IMR-90 (cell line): ENCODE measurements at regions of chr17 and their contacts with region 1.

Region 1: DNA sequence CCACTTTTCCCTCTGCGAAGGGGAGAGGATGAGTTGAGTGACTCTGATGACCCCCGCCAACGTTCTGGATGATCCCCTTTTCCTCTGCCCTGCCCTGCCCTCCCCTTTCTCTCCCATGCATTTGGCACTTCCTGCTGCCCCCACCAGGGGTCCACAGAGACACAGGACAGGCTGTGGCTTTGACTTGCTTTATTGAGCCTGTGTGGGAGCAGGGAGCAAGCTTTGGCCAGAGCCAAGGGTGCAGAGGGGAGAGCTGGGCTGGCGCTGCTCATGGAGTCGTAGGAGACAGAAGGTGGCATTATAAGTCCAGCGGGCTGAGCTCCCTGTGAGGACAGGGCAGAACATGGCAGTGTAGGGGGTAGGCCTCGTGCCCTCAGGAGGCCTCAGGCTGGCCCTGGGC is 1.6 kb downstream of the PPY start:
- DNase-seq: peak; percentile 35
- ATAC-seq: peak; percentile 74
- H3K4me3 ChIP-seq: no peak overlapping the region
- H3K27ac ChIP-seq: no peak overlapping the region
- H3K4me1 ChIP-seq: no peaks in the 10 kb centered on the region; the same call in 1 of the 2 replicates
- H3K27me3 ChIP-seq: peaks cover 36% of the 10 kb centered on the region
- CTCF ChIP-seq: peak; percentile 63
- POLR2A ChIP-seq: no peak
- RAD21 ChIP-seq: peak; percentile 63

Region 2: DNA sequence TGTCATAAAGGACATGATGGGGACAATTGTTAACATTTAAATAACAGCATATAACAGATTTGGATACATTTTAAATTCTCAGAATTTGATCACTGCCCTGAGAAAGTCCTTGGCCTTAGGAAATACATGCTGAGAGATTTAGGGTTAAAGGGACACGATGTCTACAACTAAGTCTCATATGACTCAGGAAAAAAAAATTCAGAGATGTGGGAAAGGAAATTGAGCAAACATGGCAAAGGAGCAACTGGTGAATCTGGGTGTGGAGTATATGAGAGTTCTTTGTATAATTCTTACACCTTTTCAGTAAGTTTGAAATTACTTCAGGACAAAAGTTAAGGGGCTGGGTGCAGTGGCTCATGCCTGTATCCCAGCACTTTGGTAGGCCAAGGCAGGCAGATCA is 125.9 kb before region 1 on chr17:
- CTCF ChIA-PET with region 1: no interaction called
- POLR2A ChIA-PET with region 1: no interaction called
- dilution Hi-C with region 1: no loop called
- in situ Hi-C with region 1: no loop called
- intact Hi-C with region 1: no loop called
- DNase-seq: peak; percentile 77
- ATAC-seq: peak; percentile 86
- H3K4me3 ChIP-seq: no peak overlapping the region
- H3K27ac ChIP-seq: 0 out of 2 replicates have a peak overlapping the region, but pooled peaks have one; percentile 5
- H3K4me1 ChIP-seq: peaks cover 6% of the 10 kb centered on the region
- H3K27me3 ChIP-seq: no peaks in the 10 kb centered on the region
- CTCF ChIP-seq: no peak
- POLR2A ChIP-seq: no peak
- RAD21 ChIP-seq: no peak

Region 3: GRCh38 chr17:43878260-43879175 is 62.1 kb before region 1 on chr17:
- CTCF ChIA-PET with region 1: no interaction called
- POLR2A ChIA-PET with region 1: no interaction called
- dilution Hi-C with region 1: no loop called
- in situ Hi-C with region 1: no loop called
- intact Hi-C with region 1: loop called (anchors 5 kb)
- DNase-seq: peak; percentile 89
- ATAC-seq: peak; percentile 100
- H3K4me3 ChIP-seq: no peak overlapping the region
- H3K27ac ChIP-seq: no peak overlapping the region
- H3K4me1 ChIP-seq: peaks cover 2% of the 10 kb centered on the region; the same call in 1 of the 2 replicates
- H3K27me3 ChIP-seq: peaks cover 10% of the 10 kb centered on the region
- CTCF ChIP-seq: peak; percentile 95
- POLR2A ChIP-seq: no peak
- RAD21 ChIP-seq: peak; percentile 87

Region 4: GRCh38 chr17:43888548-43888947 is 52.1 kb before region 1 on chr17:
- CTCF ChIA-PET with region 1: no interaction called
- POLR2A ChIA-PET with region 1: no interaction called
- dilution Hi-C with region 1: no loop called
- in situ Hi-C with region 1: no loop called
- intact Hi-C with region 1: no loop called
- DNase-seq: no peak
- ATAC-seq: no peak
- H3K4me3 ChIP-seq: no peak overlapping the region
- H3K27ac ChIP-seq: no peak overlapping the region
- H3K4me1 ChIP-seq: no peaks in the 10 kb centered on the region
- H3K27me3 ChIP-seq: peaks cover 12% of the 10 kb centered on the region
- CTCF ChIP-seq: no peak
- POLR2A ChIP-seq: no peak
- RAD21 ChIP-seq: no peak

Region 5: GRCh38 chr17:43900183-43900857 is 40.3 kb before region 1 on chr17:
- CTCF ChIA-PET with region 1: no interaction called
- POLR2A ChIA-PET with region 1: no interaction called
- dilution Hi-C with region 1: no loop called
- in situ Hi-C with region 1: no loop called
- intact Hi-C with region 1: no loop called
- DNase-seq: peak; percentile 72
- ATAC-seq: peak; percentile 100
- H3K4me3 ChIP-seq: peak overlapping the region; percentile 43
- H3K27ac ChIP-seq: no peak overlapping the region
- H3K4me1 ChIP-seq: no peaks in the 10 kb centered on the region
- H3K27me3 ChIP-seq: no peaks in the 10 kb centered on the region; the same call in 1 of the 2 replicates
- CTCF ChIP-seq: no peak
- POLR2A ChIP-seq: no peak
- RAD21 ChIP-seq: no peak

Region 6: GRCh38 chr17:43927060-43927864 is 13.4 kb before region 1 on chr17:
- CTCF ChIA-PET with region 1: no interaction called
- POLR2A ChIA-PET with region 1: no interaction called
- dilution Hi-C with region 1: no loop called
- in situ Hi-C with region 1: no loop called
- intact Hi-C with region 1: no loop called
- DNase-seq: no peak
- ATAC-seq: no peak
- H3K4me3 ChIP-seq: no peak overlapping the region
- H3K27ac ChIP-seq: no peak overlapping the region
- H3K4me1 ChIP-seq: no peaks in the 10 kb centered on the region
- H3K27me3 ChIP-seq: peaks cover 79% of the 10 kb centered on the region
- CTCF ChIP-seq: no peak
- POLR2A ChIP-seq: no peak
- RAD21 ChIP-seq: no peak

Region 7: GRCh38 chr17:43994272-43995149 is 53.9 kb after region 1 on chr17:
- CTCF ChIA-PET with region 1: interaction called, 11 read pairs
- POLR2A ChIA-PET with region 1: no interaction called
- dilution Hi-C with region 1: no loop called
- in situ Hi-C with region 1: no loop called
- intact Hi-C with region 1: loop called (anchors 1 kb)
- DNase-seq: peak; percentile 37
- ATAC-seq: peak; percentile 99
- H3K4me3 ChIP-seq: no peak overlapping the region; the same call in 1 of the 2 replicates
- H3K27ac ChIP-seq: no peak overlapping the region
- H3K4me1 ChIP-seq: no peaks in the 10 kb centered on the region; the same call in 1 of the 2 replicates
- H3K27me3 ChIP-seq: peaks cover 18% of the 10 kb centered on the region
- CTCF ChIP-seq: peak; percentile 96
- POLR2A ChIP-seq: peak; percentile 38; the same call in 1 of the 2 replicates
- RAD21 ChIP-seq: peak; percentile 93

Region 8: DNA sequence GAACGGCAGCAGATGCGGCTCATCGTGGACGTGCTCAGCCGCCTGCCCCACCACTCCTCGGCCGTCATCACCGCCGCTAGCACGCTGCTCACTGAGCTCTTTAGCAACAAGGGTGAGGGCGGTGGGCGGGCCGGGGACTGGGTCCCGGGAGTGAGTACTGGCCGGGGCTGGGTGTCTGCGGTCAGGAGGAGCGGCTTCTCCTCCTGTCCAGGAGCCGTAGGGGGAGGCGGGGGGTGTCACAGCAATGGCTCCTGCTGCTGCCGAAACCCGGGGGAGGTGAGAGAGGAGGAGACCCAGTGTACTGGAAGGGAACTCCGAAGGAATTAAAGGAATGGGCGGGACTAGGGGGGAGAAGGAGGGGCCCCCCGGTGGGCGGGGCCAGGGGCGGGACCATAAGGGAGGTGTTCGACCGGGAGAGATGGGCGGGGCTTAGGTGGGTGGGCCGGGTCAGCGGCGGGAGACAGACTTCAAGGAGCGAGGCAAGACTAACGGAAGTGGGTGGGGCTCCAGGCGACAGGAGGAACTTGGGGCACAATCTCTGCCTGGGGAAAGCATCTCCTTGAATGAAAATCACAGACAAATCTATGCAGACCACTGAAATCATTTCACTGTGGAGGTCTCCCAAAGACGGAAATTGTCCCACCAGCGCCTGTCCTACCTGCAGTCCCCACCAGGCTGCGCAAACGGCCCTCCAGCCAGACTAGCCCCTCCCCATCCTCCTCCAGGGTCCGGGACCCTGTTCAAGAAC is 66.1 kb after region 1 on chr17:
- CTCF ChIA-PET with region 1: no interaction called
- POLR2A ChIA-PET with region 1: no interaction called
- dilution Hi-C with region 1: no loop called
- in situ Hi-C with region 1: loop called (anchors 5 kb)
- intact Hi-C with region 1: no loop called
- DNase-seq: peak; percentile 92
- ATAC-seq: peak; percentile 91
- H3K4me3 ChIP-seq: peak overlapping the region; percentile 59
- H3K27ac ChIP-seq: peak overlapping the region; percentile 59
- H3K4me1 ChIP-seq: peaks cover 23% of the 10 kb centered on the region
- H3K27me3 ChIP-seq: peaks cover 3% of the 10 kb centered on the region; the same call in 1 of the 2 replicates
- CTCF ChIP-seq: peak; percentile 70
- POLR2A ChIP-seq: 0 out of 2 replicates have a peak, but pooled peaks have one; percentile 50
- RAD21 ChIP-seq: peak; percentile 59

Region 9: DNA sequence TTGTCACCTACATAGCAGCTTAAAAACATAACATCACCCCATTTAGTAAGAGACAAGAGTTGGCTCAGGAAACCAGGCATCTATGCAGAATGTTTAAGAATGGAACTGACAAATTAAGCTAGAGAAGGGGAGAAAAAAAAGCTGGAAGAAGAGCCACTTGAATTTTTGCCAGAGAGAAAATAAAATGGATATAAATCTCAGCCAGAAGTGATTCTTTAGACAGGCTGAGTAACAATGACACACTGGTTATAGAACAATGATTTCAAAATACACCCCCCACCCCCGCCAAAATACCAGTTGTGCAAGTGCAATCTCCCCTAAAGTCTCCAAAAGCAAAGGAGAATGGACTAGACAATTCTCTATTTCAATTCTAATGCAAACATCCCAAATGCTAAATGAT is 103.4 kb after region 1 on chr17:
- CTCF ChIA-PET with region 1: interaction called, 6 read pairs
- POLR2A ChIA-PET with region 1: no interaction called
- dilution Hi-C with region 1: no loop called
- in situ Hi-C with region 1: no loop called
- intact Hi-C with region 1: loop called (anchors 1 kb)
- DNase-seq: peak; percentile 65
- ATAC-seq: no peak; the same call in 1 of the 2 replicates
- H3K4me3 ChIP-seq: no peak overlapping the region
- H3K27ac ChIP-seq: peak overlapping the region; percentile 57; the same call in 1 of the 2 replicates
- H3K4me1 ChIP-seq: peaks cover 12% of the 10 kb centered on the region
- H3K27me3 ChIP-seq: no peaks in the 10 kb centered on the region
- CTCF ChIP-seq: no peak
- POLR2A ChIP-seq: no peak
- RAD21 ChIP-seq: no peak

Region 10: DNA sequence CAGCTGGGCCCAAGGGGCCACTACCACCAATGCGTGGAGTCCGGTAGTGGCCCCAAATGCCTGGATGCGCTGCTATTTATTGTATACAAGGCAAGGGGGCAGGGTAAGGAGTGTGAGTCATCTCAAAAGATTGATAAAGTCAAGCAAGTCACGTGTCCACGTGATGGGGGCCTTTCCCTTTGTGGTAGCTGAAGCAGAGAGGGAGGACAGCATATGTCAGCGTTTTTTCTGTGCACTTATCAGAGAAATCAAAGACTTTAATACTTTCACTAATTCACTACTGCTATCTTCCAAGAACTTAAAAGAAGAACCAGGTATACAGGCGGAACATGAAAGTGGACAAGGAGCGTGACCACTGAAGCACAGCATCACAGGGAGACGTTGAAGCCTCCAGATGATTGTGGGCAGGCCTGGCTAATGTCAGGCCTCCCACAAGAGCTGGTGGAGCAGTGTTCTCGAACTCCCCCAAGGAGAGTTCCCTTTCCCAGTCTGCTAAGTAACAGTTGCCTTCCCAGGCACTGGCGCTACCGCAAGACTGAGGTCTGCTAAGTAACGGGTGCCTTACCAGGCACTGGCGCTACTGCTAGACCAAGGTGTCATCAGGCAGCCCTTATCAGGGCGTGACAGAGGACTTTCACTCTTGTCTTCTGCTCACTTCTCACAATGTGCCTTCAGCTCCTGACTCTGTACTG is 219.0 kb after region 1 on chr17:
- CTCF ChIA-PET with region 1: no interaction called
- POLR2A ChIA-PET with region 1: no interaction called
- dilution Hi-C with region 1: no loop called
- in situ Hi-C with region 1: loop called (anchors 10 kb)
- intact Hi-C with region 1: no loop called
- DNase-seq: peak; percentile 25
- ATAC-seq: no peak
- H3K4me3 ChIP-seq: no peak overlapping the region
- H3K27ac ChIP-seq: no peak overlapping the region
- H3K4me1 ChIP-seq: peaks cover 3% of the 10 kb centered on the region; the same call in 1 of the 2 replicates
- H3K27me3 ChIP-seq: no peaks in the 10 kb centered on the region
- CTCF ChIP-seq: no peak
- POLR2A ChIP-seq: no peak
- RAD21 ChIP-seq: no peak